Caco-2 (cell line): ENCODE measurements at regions of chr3 and their contacts with region 1.

Region 1: GRCh38 chr3:25143356-25144025 is 284.6 kb upstream of the RARB start:
- DNase-seq: no peak
- H3K4me3 ChIP-seq: no peak overlapping the region
- H3K4me3 Mint-ChIP-seq: no peak overlapping the region
- H3K27ac Mint-ChIP-seq: no peak overlapping the region
- H3K4me1 ChIP-seq: peaks cover 7% of the 10 kb centered on the region; the same call in 1 of the 2 replicates
- H3K4me1 Mint-ChIP-seq: peaks cover 3% of the 10 kb centered on the region
- H3K27me3 ChIP-seq: no peaks in the 10 kb centered on the region
- H3K27me3 Mint-ChIP-seq: no peaks in the 10 kb centered on the region
- CTCF ChIP-seq: no peak

Region 2: GRCh38 chr3:24952388-24952787 is 191.1 kb before region 1 on chr3:
- CTCF ChIA-PET with region 1: no interaction called
- POLR2A ChIA-PET with region 1: no interaction called
- intact Hi-C with region 1: no loop called
- DNase-seq: no peak
- H3K4me3 ChIP-seq: no peak overlapping the region
- H3K4me3 Mint-ChIP-seq: no peak overlapping the region
- H3K27ac Mint-ChIP-seq: no peak overlapping the region
- H3K4me1 ChIP-seq: no peaks in the 10 kb centered on the region
- H3K4me1 Mint-ChIP-seq: no peaks in the 10 kb centered on the region
- H3K27me3 ChIP-seq: no peaks in the 10 kb centered on the region
- H3K27me3 Mint-ChIP-seq: peaks cover 26% of the 10 kb centered on the region
- CTCF ChIP-seq: no peak

Region 3: GRCh38 chr3:25166016-25166415 is 22.5 kb after region 1 on chr3:
- CTCF ChIA-PET with region 1: no interaction called
- POLR2A ChIA-PET with region 1: no interaction called
- intact Hi-C with region 1: no loop called
- DNase-seq: no peak
- H3K4me3 ChIP-seq: no peak overlapping the region
- H3K4me3 Mint-ChIP-seq: no peak overlapping the region
- H3K27ac Mint-ChIP-seq: no peak overlapping the region
- H3K4me1 ChIP-seq: no peaks in the 10 kb centered on the region
- H3K4me1 Mint-ChIP-seq: no peaks in the 10 kb centered on the region
- H3K27me3 ChIP-seq: no peaks in the 10 kb centered on the region
- H3K27me3 Mint-ChIP-seq: no peaks in the 10 kb centered on the region
- CTCF ChIP-seq: no peak

Region 4: DNA sequence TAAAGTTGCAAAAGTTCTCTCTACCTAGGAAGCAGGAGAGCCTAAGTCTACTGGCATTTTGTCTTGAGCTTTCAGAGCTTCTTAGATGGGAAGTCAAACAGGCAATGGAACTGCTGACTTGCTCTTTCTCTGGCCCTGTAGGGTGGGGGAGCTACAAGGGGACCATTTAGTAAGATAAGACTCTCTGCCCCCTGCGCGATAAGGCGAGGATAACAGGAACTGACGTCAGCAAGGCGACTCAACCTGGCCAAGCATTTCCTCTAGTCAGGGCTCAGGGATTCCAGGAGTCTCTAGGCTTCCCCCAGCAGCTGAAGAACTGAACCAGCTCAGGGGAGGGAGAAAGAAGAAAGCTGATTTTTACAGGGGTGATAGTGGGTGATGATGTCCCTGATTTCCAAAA is 290.4 kb after region 1 on chr3:
- CTCF ChIA-PET with region 1: no interaction called
- POLR2A ChIA-PET with region 1: no interaction called
- intact Hi-C with region 1: loop called (anchors 10 kb)
- DNase-seq: no peak
- H3K4me3 ChIP-seq: no peak overlapping the region
- H3K4me3 Mint-ChIP-seq: no peak overlapping the region
- H3K27ac Mint-ChIP-seq: no peak overlapping the region
- H3K4me1 ChIP-seq: peaks cover 42% of the 10 kb centered on the region
- H3K4me1 Mint-ChIP-seq: peaks cover 15% of the 10 kb centered on the region
- H3K27me3 ChIP-seq: no peaks in the 10 kb centered on the region
- H3K27me3 Mint-ChIP-seq: no peaks in the 10 kb centered on the region
- CTCF ChIP-seq: no peak